Activated CD8-positive, alpha-beta T cell treated with anti-CD3 and anti-CD28 coated beads for 36 hours (primary cell): ENCODE measurements at regions of chr3 and their contacts with region 1.

Region 1: DNA sequence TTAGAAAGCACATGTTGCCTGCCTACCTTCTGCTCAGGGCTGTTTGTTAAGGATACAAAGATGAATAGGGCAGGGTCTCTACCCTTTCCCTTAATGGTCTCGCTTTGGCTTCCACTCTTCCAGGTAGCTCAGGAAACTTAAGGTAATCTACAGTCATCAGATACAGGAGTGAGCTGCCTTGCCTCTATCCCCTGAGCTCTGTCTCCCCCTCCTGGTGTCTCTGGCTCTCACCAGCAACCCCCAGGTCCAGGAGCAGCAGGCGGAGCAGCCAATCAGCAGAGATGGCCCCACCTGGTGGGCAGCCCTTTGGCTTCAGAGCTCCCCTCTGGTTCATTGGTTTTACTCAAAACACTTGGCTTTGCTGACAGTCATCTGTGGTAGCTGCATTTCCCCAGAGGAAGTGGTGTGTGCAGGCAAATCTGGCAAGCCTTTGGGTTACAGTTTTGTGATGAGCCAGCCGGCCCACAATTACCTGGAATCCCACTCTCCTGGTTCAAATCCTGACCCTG is 8.5 kb upstream of the CX3CR1 start:
- DNase-seq: peak; percentile 92
- ATAC-seq: peak; percentile 98
- H3K4me3 Mint-ChIP-seq: no peak overlapping the region
- H3K27ac Mint-ChIP-seq: peak overlapping the region; percentile 4
- H3K4me1 Mint-ChIP-seq: peaks cover 30% of the 10 kb centered on the region
- H3K27me3 Mint-ChIP-seq: no peaks in the 10 kb centered on the region
- CTCF ChIP-seq: peak; percentile 92

Region 2: DNA sequence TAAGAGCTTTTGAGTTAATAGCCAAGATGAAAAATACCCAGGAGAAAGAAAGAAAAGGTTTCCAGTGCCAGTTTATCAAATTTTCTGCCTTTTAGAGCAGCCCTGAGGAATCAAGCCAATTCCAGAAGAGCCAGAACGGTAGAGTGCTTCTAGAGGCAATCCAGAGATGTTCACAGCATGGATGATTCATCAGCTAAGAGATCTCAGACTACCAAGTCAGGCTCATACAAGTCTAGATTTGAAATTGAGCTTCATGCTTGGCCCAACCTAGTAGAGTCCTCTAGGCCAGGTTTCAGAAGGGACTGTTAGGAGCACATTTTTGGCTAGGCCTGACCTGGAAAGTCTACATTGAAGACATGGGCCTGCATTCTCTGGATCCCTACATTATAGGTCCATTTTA is 221.1 kb before region 1 on chr3:
- CTCF ChIA-PET with region 1: interaction called, 12 read pairs
- POLR2A ChIA-PET with region 1: no interaction called
- intact Hi-C with region 1: no loop called
- DNase-seq: no peak
- ATAC-seq: no peak
- H3K4me3 Mint-ChIP-seq: no peak overlapping the region
- H3K27ac Mint-ChIP-seq: no peak overlapping the region
- H3K4me1 Mint-ChIP-seq: peaks cover 10% of the 10 kb centered on the region
- H3K27me3 Mint-ChIP-seq: no peaks in the 10 kb centered on the region
- CTCF ChIP-seq: no peak

Region 3: DNA sequence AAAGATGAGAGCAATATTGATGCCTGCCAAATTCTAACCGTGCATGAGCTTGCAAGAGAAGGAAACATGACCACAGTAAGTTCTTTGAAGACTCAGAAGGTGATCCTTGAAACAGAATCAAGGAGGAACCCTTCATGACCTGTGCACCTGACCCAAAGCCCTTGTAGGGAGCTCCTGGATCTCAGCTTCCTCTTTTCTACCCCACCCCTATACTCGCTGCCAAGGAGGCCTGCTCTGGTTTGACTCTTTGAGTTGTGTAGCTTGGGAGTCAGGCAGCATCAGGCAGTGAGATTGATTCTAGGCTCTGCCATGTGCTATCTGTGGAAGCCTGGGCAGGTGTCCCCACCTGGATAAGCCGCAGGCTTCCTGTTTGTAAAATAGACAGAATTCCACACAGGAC is 170.3 kb before region 1 on chr3:
- CTCF ChIA-PET with region 1: interaction called, 64 read pairs
- POLR2A ChIA-PET with region 1: no interaction called
- intact Hi-C with region 1: no loop called
- DNase-seq: no peak
- ATAC-seq: no peak
- H3K4me3 Mint-ChIP-seq: no peak overlapping the region
- H3K27ac Mint-ChIP-seq: no peak overlapping the region
- H3K4me1 Mint-ChIP-seq: no peaks in the 10 kb centered on the region
- H3K27me3 Mint-ChIP-seq: no peaks in the 10 kb centered on the region
- CTCF ChIP-seq: no peak

Region 4: DNA sequence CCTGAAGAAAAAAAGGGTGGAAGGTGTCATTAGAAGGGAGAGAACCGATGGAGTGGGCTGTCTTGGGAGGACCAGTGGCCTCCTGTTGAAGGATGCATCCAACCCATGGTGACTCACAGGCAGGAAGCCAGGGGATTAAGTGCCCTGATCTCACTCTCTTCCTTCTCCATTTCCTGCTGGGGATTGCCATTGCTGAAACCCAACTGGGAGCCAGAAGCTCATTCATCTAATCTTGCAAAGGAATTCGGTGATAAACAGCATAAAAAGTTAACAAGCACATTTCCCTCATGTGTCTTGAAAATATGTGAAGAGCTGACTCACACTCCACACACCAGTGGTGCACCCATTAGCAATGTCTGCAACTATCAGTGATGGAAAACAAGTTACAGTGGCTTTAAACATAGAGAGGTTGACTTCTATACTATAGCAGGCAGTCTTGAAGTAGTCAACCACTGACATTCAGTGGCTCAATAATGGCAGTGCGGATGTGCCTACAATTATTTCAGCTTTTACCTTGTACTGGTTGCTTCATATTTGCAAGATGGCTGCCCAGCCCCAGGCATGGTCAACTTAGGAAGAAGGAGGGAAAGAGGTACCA is 122.1 kb before region 1 on chr3:
- CTCF ChIA-PET with region 1: interaction called, 18 read pairs
- POLR2A ChIA-PET with region 1: no interaction called
- intact Hi-C with region 1: no loop called
- DNase-seq: peak; percentile 1
- ATAC-seq: peak; percentile 55
- H3K4me3 Mint-ChIP-seq: no peak overlapping the region
- H3K27ac Mint-ChIP-seq: no peak overlapping the region
- H3K4me1 Mint-ChIP-seq: peaks cover 18% of the 10 kb centered on the region
- H3K27me3 Mint-ChIP-seq: no peaks in the 10 kb centered on the region
- CTCF ChIP-seq: no peak

Region 5: DNA sequence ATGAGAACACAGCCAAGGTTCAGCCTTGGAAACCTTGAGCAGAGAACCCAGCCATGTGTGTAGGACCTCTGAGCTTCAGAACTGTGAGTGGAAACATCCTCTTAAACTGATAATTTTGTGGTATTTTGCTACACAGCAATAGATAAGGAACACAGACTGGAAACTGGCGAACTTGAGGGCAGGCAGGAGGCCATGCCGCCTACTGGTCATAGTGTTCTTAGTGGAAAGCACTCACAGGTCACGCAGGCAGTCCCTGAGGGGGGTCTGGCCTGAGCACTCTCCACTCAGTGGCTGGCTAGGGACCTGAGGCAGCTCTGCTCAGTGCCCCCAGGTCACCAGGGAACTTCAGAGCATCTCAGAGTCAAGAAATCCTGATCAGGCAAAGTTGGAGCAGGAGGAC is 86.3 kb before region 1 on chr3:
- CTCF ChIA-PET with region 1: interaction called, 754 read pairs
- POLR2A ChIA-PET with region 1: interaction called, 5 read pairs
- intact Hi-C with region 1: loop called (anchors 5 kb)
- DNase-seq: no peak
- ATAC-seq: no peak
- H3K4me3 Mint-ChIP-seq: no peak overlapping the region
- H3K27ac Mint-ChIP-seq: no peak overlapping the region
- H3K4me1 Mint-ChIP-seq: no peaks in the 10 kb centered on the region
- H3K27me3 Mint-ChIP-seq: peaks cover 11% of the 10 kb centered on the region
- CTCF ChIP-seq: no peak

Region 6: DNA sequence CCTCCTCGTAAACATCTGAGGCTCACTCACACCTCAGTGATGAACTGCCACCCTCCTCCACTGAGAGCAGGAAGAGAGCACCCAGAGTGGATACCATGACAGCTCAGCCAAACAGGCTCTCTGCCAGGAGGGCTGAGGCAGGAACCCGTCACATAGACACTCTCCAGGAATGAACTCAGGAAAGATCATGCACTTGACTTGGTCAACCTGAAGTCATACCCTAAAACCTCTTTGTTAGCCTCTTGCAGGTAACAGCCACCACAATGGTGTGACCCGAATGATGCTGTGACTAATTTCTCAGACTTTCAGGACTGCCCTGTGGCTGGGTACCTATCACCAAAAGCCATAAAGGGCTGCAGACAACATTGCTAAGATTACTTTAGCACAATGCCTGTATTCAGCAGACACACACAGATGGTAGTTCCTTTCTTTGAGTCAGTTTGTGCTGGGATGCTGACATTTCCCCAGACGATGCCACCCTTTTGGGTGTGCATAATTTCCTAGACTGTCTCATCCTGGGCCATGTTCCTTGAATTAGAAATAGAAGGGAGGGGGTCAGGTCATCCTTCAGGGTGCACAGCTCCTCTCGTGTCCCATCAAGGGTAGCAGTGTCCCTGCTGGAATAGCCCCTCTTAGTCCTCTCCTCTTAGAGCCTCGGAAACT is 38.8 kb before region 1 on chr3:
- CTCF ChIA-PET with region 1: interaction called, 22 read pairs
- POLR2A ChIA-PET with region 1: no interaction called
- intact Hi-C with region 1: no loop called
- DNase-seq: no peak
- ATAC-seq: peak; percentile 60
- H3K4me3 Mint-ChIP-seq: no peak overlapping the region
- H3K27ac Mint-ChIP-seq: no peak overlapping the region
- H3K4me1 Mint-ChIP-seq: peaks cover 16% of the 10 kb centered on the region
- H3K27me3 Mint-ChIP-seq: no peaks in the 10 kb centered on the region
- CTCF ChIP-seq: no peak

Region 7: DNA sequence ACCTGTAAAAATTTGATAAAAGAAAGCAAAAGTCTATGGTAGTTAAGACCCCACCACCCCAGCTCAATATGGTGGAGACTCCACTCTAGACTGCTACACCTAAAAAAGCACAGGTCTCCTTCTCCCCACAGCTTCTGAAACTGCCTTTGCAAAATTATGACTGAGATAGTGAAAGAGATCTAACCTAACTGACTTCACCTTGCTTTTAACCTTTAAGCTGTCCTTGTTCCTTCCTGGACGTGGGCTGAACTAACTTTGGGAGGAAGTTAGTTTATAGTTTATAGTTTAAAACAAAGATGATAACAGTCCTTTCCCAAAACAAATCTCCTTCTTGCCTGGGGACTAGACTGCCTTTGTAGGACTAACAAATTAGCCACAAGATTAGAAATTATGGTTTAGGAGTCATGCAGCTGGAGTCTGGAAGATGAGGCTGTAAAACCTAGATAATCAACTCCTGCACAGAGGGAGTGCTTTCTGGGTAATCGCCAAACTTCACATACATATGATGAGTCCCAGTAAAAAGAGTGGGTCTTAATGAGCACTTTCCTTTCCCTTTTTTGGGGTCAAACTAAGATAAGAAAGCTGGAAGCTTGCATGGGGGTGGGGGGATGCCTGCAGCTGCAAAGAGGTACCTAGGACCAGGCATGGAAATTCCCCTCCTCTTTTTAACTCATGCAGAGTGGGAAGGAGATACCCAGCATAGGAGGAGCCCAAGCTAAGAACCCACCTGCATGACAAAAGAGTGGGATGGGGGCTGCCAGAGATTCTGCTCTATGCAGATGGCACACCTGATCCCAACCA is 58.6 kb after region 1 on chr3:
- CTCF ChIA-PET with region 1: interaction called, 18 read pairs
- POLR2A ChIA-PET with region 1: no interaction called
- intact Hi-C with region 1: no loop called
- DNase-seq: no peak
- ATAC-seq: peak; percentile 86
- H3K4me3 Mint-ChIP-seq: no peak overlapping the region
- H3K27ac Mint-ChIP-seq: peak overlapping the region; percentile 31
- H3K4me1 Mint-ChIP-seq: peaks cover 26% of the 10 kb centered on the region
- H3K27me3 Mint-ChIP-seq: no peaks in the 10 kb centered on the region
- CTCF ChIP-seq: no peak